Astrocyte of the cerebellum (primary cell): ENCODE measurements at regions of chr6 and their contacts with region 1.

Region 1: DNA sequence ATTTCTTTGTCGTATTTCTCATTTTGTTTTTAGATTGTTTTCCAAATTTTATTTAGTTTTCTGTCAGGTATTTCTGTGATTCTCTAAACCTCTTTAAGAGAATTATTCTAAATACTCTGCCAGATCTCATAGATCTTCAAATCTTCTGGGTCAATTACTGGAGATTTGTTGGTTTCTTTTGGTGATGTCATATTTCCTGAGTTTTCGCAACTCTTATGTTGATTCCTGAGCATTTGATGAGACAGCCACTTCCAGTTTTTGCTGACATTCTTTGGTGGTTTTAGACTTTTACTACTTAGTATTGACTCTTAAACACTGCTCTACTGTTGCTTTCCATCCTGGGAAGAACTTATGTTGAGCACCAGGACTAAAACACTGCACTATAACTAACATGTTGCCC is 21.9 kb downstream of the ADGB start:
- DNase-seq: no peak
- H3K4me3 ChIP-seq: no peak overlapping the region
- CTCF ChIP-seq: no peak

Region 2: DNA sequence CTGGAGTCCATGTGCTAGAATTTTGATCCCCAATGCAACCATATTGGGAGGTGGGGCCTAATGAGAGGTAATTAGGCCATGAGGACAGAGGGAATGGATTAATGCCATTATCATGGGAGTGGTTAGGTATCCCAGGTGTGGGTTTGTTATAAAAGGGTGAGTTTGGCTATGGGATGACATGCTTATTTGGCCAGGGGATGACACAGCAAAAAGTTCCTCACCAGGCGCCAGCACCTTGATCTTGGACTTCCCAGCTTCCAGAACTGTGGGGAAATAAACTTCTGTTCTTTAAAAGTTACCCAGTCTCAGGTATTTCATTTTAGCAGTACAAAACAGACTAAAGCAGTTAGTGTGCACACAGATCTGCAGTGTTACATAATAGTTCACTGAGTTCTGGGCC is 62.3 kb after region 1 on chr6:
- in situ Hi-C with region 1: loop called (anchors 5 kb)
- DNase-seq: no peak
- H3K4me3 ChIP-seq: no peak overlapping the region
- CTCF ChIP-seq: no peak